HepG2 (cell line): ENCODE measurements at regions of chr22 and their contacts with region 1.

Region 1: DNA sequence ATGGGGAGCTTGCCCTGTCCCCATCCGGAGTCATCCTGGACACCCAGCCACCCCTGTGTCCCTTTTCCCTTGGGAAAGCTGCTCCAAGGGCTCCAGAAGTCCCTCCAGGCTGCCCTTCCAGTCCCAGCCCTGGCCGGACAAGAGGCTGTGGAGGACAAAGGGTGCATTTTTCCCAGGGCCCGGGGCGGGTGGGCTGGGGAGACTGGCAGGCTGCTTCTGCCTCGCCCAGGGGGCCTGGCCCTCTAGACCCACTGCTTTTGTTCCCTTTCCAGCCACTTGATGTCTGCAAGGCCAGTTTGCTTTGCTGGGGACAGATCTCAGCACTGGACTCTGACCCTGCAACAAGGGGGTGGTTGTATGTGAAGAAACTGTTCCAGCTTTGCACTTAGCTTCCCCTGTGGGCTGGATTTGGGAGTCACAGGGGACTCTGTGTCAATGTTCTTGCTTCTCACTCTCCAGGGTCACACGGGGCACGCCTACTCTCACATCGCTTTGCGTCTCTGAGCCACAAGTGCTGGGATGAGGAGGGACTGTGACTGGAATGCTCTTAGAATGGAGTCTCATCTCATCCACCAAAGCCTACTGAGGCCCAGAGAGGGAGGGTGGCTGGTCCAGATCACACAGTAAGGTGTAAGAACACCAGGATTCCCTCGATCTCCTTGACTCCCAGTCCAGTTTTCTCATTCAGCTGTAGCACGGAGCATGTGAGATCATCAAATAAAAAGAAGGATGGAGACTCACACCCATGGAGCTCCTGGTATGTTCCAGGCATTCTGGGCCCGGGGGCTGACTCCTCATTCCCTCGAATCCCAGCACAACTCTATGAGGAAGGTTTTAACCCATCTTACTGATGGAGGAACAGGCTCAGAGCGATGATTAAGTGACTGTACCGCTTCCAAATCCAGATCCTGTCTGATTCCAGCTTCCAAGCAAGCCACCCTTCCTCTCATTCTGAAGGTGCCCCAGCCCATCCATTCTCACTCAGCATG is 59.9 kb downstream of the FBXO7 start:
- DNase-seq: peak; percentile 87
- ATAC-seq: peak; percentile 37
- H3K4me3 ChIP-seq: peak overlapping the region; percentile 31 to 72 (median 40); a peak in 5 of 6 replicates
- H3K27ac ChIP-seq: peak overlapping the region; percentile 78
- H3K4me1 ChIP-seq: peaks cover 91% of the 10 kb centered on the region
- H3K27me3 ChIP-seq: no peaks in the 10 kb centered on the region
- CTCF ChIP-seq: peak; percentile 34; the same call in 1 of the 2 replicates
- EP300 ChIP-seq: peak in 1 of 2 experiments; percentile 66; a peak in 1 of 4 replicates
- POLR2A ChIP-seq: peak in 1 of 2 experiments; percentile 55; a peak in 2 of 4 replicates
- RAD21 ChIP-seq: no peak

Region 2: DNA sequence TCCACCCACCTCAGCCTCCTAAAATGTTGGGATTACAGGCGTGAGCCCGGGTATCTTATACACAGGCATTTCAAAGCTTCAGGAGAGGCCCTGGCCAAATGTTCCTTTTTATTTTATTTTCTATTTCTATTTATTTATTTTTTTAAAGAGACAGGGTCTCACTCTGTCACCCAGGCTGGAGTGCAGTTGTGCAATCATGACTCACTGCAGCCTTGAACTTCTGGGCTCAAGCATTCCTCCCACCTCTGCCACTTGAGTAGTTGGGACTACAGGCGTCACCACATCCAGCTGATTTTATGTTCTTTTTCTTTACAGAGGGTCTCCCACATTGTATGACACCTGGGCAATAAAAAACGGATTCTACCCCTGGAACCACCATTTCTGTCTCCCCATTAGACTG is 11.3 kb after region 1 on chr22:
- CTCF ChIA-PET with region 1: no interaction called
- POLR2A ChIA-PET with region 1: interaction called, 11 read pairs
- in situ Hi-C with region 1: no loop called
- intact Hi-C with region 1: no loop called
- DNase-seq: peak; percentile 69
- ATAC-seq: peak; percentile 62
- H3K4me3 ChIP-seq: no peak overlapping the region
- H3K27ac ChIP-seq: no peak overlapping the region
- H3K4me1 ChIP-seq: peaks cover 18% of the 10 kb centered on the region
- H3K27me3 ChIP-seq: no peaks in the 10 kb centered on the region
- CTCF ChIP-seq: no peak
- EP300 ChIP-seq: 0 out of 4 replicates have a peak, but pooled peaks have one; percentile 19 to 21
- POLR2A ChIP-seq: no peak
- RAD21 ChIP-seq: no peak

Region 3: DNA sequence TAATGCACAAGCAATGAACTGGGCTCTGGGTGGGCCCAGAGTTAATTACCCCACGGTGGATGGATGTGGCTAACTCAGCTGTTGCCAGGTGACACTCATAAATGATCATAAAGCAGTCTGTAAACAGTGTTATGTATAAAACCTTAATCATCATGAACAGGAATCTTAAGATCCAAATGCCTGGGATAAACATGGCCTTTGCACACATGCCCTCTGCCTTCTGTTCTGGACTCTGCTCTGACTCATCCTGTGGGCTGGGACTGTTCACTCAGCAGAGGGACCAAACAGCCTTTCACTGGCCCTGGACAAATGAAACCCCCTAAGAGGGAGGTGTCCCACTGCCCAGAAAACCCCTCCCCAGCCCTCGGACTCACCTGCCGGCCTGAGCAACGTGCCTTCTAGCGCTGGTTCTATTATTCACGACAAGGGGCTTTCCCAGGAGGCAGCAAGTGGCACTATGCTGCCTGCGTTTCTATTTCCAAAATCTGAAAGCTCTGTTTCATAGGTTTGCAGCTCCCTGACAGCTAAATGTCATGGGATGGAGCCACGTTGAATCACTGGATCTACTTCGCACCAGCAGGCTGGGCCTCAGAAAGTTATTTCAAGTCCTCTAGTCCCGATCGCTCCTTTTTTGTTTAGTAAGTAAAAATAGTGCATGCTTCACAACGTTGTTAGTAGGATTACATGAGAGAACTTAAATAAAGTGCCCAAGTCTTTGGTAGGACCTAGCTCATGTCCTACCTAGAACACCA is 1332.7 kb after region 1 on chr22:
- CTCF ChIA-PET with region 1: no interaction called
- POLR2A ChIA-PET with region 1: no interaction called
- in situ Hi-C with region 1: no loop called
- intact Hi-C with region 1: no loop called
- DNase-seq: peak; percentile 48
- ATAC-seq: peak; percentile 72
- H3K4me3 ChIP-seq: no peak overlapping the region; a peak in 1 of 6 replicates
- H3K27ac ChIP-seq: peak overlapping the region; percentile 39
- H3K4me1 ChIP-seq: peaks cover 41% of the 10 kb centered on the region
- H3K27me3 ChIP-seq: no peaks in the 10 kb centered on the region
- CTCF ChIP-seq: no peak
- EP300 ChIP-seq: no peak; a peak in 1 of 4 replicates
- POLR2A ChIP-seq: no peak
- RAD21 ChIP-seq: no peak